Activated B cell treated with CpG ODN at 0.5 μM for 24 hours (primary cell): ENCODE measurements at regions of chr6 and their contacts with region 1.

Region 1: DNA sequence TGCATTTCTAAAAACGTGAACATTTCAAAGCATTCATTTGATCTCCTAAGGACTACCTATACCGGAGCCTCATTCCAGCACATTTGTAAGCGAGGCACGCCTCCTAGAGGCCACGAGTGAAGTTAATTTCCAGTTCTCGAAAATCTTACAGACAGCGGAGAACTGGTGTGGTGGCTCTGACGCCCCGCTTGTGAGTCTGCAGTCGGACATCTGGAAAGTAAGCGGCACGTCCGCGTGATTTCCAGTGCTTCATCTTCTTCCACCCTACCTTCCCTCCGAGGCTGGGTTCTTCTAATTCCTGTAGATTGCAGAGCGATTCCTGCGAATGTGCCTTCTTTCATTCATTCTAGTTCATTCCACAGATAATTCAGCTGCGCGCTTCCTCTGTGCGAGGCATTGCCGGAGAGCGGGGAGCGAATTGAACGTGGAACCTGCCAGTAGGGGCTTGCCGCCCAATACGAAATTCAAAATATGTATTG is 810 bp upstream of the PRIM2 start:
- DNase-seq: peak; percentile 66
- ATAC-seq: peak; percentile 86
- H3K4me3 Mint-ChIP-seq: peak overlapping the region; percentile 97
- H3K27ac Mint-ChIP-seq: peak overlapping the region; percentile 89
- H3K4me1 Mint-ChIP-seq: peaks cover 18% of the 10 kb centered on the region
- H3K27me3 Mint-ChIP-seq: peaks cover 9% of the 10 kb centered on the region
- CTCF ChIP-seq: peak; percentile 40

Region 2: GRCh38 chr6:56595490-56596122 is 721.0 kb before region 1 on chr6:
- CTCF ChIA-PET with region 1: no interaction called
- POLR2A ChIA-PET with region 1: no interaction called
- intact Hi-C with region 1: loop called (anchors 2 kb)
- DNase-seq: no peak
- ATAC-seq: peak; percentile 51
- H3K4me3 Mint-ChIP-seq: no peak overlapping the region
- H3K27ac Mint-ChIP-seq: no peak overlapping the region
- H3K4me1 Mint-ChIP-seq: peaks cover 26% of the 10 kb centered on the region
- H3K27me3 Mint-ChIP-seq: no peaks in the 10 kb centered on the region
- CTCF ChIP-seq: no peak

Region 3: GRCh38 chr6:56902641-56903464 is 413.8 kb before region 1 on chr6:
- CTCF ChIA-PET with region 1: interaction called, 112 read pairs
- POLR2A ChIA-PET with region 1: interaction called, 3 read pairs
- intact Hi-C with region 1: loop called (anchors 1 kb)
- DNase-seq: no peak
- ATAC-seq: no peak
- H3K4me3 Mint-ChIP-seq: no peak overlapping the region
- H3K27ac Mint-ChIP-seq: no peak overlapping the region
- H3K4me1 Mint-ChIP-seq: no peaks in the 10 kb centered on the region
- H3K27me3 Mint-ChIP-seq: peaks cover 6% of the 10 kb centered on the region
- CTCF ChIP-seq: peak; percentile 7

Region 4: DNA sequence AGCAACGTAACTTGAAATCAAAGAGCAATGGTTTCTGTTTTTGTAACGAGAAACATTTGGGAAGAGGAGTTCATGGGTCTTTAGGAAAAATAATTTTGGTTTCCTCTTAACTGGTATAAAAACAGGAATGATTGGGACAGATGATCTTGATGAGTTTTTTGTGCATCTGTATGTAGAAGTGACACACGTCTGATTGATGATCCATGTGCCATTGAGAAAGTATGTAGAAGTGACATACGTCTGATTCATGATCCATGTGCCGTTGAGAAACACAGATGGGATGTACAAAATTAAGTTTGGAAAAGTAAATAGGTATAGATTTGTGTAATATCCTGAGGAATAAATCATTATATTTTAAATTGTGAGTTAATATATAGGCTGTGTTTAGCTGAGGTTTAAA is 268.0 kb before region 1 on chr6:
- CTCF ChIA-PET with region 1: no interaction called
- POLR2A ChIA-PET with region 1: no interaction called
- intact Hi-C with region 1: loop called (anchors 5 kb)
- DNase-seq: no peak
- ATAC-seq: no peak
- H3K4me3 Mint-ChIP-seq: no peak overlapping the region
- H3K27ac Mint-ChIP-seq: no peak overlapping the region
- H3K4me1 Mint-ChIP-seq: peaks cover 21% of the 10 kb centered on the region
- H3K27me3 Mint-ChIP-seq: no peaks in the 10 kb centered on the region
- CTCF ChIP-seq: no peak

Region 5: DNA sequence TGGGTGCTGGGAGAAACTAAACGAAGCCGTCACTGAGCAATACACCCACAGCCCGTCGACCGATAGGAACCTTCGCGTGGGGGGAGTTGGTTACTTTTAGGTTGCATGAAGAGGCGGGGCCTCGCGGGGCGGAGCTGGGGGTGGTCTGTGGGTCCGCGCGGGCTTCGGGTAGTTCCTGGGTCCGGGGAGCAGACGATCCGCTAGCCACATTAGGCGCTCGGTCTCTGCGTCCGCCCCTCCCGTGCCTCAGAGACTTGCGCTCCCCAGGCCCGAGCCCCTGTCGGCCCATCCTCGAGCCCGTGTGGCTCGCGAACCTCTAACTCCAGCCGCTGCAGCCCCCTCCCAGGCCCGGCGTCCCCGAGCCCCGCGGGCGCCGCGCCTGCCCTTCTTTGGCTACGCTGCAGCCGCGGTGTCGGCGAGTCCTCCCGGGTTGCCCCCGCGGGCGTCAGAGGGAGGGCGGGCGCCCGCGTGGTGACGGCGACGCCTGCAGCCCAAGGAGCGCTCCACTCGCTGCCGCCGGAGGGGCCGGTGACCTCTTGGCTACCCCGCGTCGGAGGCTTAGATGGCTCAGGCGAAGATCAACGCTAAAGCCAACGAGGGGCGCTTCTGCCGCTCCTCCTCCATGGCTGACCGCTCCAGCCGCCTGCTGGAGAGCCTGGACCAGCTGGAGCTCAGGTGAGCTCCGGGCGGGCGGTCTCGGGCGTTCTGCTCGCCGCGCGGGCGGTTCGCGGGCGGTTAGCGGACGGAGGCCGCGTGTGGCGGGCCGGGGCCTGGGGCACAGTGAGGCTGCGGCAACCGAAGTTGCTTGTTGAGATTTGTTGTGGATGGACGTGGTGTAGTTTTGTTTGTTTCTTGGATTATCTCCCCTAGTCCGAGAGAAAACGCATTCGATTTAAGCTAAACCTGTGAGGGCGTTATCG is 144.2 kb before region 1 on chr6 and contains the start of gene BAG2:
- CTCF ChIA-PET with region 1: no interaction called
- POLR2A ChIA-PET with region 1: interaction called, 4 read pairs
- intact Hi-C with region 1: loop called (anchors 1 kb)
- DNase-seq: peak; percentile 86
- ATAC-seq: peak; percentile 87
- H3K4me3 Mint-ChIP-seq: peak within 1 kb of the TSS; percentile 92
- H3K27ac Mint-ChIP-seq: peak within 1 kb of the TSS; percentile 92
- H3K4me1 Mint-ChIP-seq: peaks cover 26% of the 10 kb centered on the region
- H3K27me3 Mint-ChIP-seq: no peaks in the 10 kb centered on the region
- CTCF ChIP-seq: no peak
- total RNA-seq, gene BAG2: 3.9 and 4.3 TPM in 2 replicates